Heart right ventricle (tissue), 16 donors: ENCODE measurements at regions of chr9 and their contacts with region 1.

Region 1: GRCh38 chr9:84079994-84080393 is 99.4 kb downstream of the RMI1 start:
- DNase-seq: no peak
- ATAC-seq: no peak
- H3K4me3 ChIP-seq: no peak overlapping the region
- H3K27ac ChIP-seq: no peak overlapping the region
- H3K4me1 ChIP-seq: peaks cover 0 to 9% (median 3%) of the 10 kb centered on the region in 9 donors
- H3K27me3 ChIP-seq: no peaks in the 10 kb centered on the region
- CTCF ChIP-seq: no peak

Region 2: GRCh38 chr9:83992421-83992820 is 87.6 kb before region 1 on chr9:
- intact Hi-C with region 1: loop called in 1 of 10 experiments (anchors 10 kb)
- DNase-seq: no peak
- ATAC-seq: no peak
- H3K4me3 ChIP-seq: no peak overlapping the region
- H3K27ac ChIP-seq: no peak overlapping the region
- H3K4me1 ChIP-seq: peaks cover 0 to 5% (median 0%) of the 10 kb centered on the region in 9 donors
- H3K27me3 ChIP-seq: no peaks in the 10 kb centered on the region
- CTCF ChIP-seq: peak in 1 of 9 donors; percentile 6

Region 3: DNA sequence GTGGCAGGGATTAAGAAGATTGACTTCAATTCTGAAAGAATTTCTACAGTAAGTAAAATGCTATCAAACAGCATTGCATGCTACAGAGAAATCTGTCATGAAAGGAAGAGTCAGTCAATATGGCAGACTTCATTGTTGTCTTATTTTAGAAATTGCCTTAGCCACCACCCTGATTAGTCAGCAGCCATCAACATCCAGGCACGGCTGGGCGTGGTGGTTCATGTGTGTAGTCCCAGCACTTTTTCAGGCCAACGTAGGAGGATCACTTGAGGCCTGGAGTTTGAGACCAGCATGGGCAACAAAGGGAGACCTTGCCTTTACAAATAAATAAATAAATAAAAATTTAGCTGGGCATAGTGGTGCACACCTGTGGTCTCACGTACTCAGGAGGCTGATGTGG is 52.8 kb before region 1 on chr9:
- intact Hi-C with region 1: loop called in 1 of 10 experiments (anchors 10 kb)
- DNase-seq: no peak
- ATAC-seq: no peak
- H3K4me3 ChIP-seq: no peak overlapping the region
- H3K27ac ChIP-seq: no peak overlapping the region
- H3K4me1 ChIP-seq: no peaks in the 10 kb centered on the region
- H3K27me3 ChIP-seq: no peaks in the 10 kb centered on the region
- CTCF ChIP-seq: no peak